Spleen (tissue), 13 donors: ENCODE measurements at regions of chr14 and their contacts with region 1.

Region 1: GRCh38 chr14:71320107-71320733 is 413.0 kb downstream of the PCNX1 start:
- DNase-seq: peak; percentile 100
- H3K4me3 ChIP-seq: peak within 1 kb of the TSS; percentile 63 to 88 (median 74)
- H3K27ac ChIP-seq: peak within 1 kb of the TSS; percentile 87 to 99 (median 99)
- H3K4me1 ChIP-seq: peaks cover 17 to 55% (median 43%) of the 10 kb centered on the region in 6 donors
- H3K27me3 ChIP-seq: no peaks in the 10 kb centered on the region
- CTCF ChIP-seq: peak in 6 of 11 experiments; percentile 10 to 65 (median 40)
- POLR2A ChIP-seq: peak in 2 of 3 donors; percentile 75 to 94

Region 2: GRCh38 chr14:71138448-71139293 is 181.5 kb before region 1 on chr14:
- intact Hi-C with region 1: loop called (anchors 10 kb)
- DNase-seq: peak; percentile 87
- H3K4me3 ChIP-seq: peak overlapping the region in 3 of 8 donors; percentile 12 to 57 (median 16)
- H3K27ac ChIP-seq: peak overlapping the region in 2 of 8 donors; percentile 9 to 31
- H3K4me1 ChIP-seq: peaks cover 0 to 51% (median 36%) of the 10 kb centered on the region in 6 donors
- H3K27me3 ChIP-seq: no peaks in the 10 kb centered on the region
- CTCF ChIP-seq: peak; percentile 86 to 97 (median 93)
- POLR2A ChIP-seq: no peak

Region 3: DNA sequence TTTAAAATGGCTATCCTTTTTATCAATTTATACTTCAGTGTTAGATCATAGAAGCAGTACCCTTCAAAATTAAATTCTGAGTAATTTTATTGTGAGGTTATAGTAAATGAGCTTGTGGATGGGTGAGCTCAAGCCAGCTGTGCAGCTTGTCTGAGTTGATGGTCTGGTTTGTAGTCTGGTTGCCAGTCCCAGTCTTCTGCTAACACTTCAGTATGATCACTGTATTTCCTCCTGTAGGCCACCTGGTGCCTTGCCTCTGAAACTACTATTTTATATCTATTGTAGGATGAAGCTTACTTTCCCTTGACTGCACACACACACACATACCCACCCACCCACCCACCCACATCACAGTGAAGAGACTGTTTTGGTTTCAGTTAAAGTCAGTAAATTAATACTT is 83.4 kb after region 1 on chr14:
- intact Hi-C with region 1: loop called (anchors 10 kb)
- DNase-seq: no peak
- H3K4me3 ChIP-seq: no peak overlapping the region
- H3K27ac ChIP-seq: peak overlapping the region in 3 of 8 donors; percentile 48 to 95 (median 89)
- H3K4me1 ChIP-seq: peaks cover 17 to 78% (median 46%) of the 10 kb centered on the region in 6 donors
- H3K27me3 ChIP-seq: no peaks in the 10 kb centered on the region
- CTCF ChIP-seq: peak in 3 of 11 experiments; percentile 11 to 41 (median 36)
- POLR2A ChIP-seq: no peak

Region 4: GRCh38 chr14:71415404-71415690 is 95.1 kb after region 1 on chr14:
- intact Hi-C with region 1: no loop called
- DNase-seq: no peak
- H3K4me3 ChIP-seq: no peak overlapping the region
- H3K27ac ChIP-seq: peak overlapping the region; percentile 6 to 75 (median 55)
- H3K4me1 ChIP-seq: peaks cover 0 to 74% (median 37%) of the 10 kb centered on the region in 6 donors
- H3K27me3 ChIP-seq: no peaks in the 10 kb centered on the region
- CTCF ChIP-seq: no peak
- POLR2A ChIP-seq: no peak

Region 5: GRCh38 chr14:71529848-71530247 is 209.6 kb after region 1 on chr14:
- intact Hi-C with region 1: loop called (anchors 10 kb)
- DNase-seq: no peak
- H3K4me3 ChIP-seq: no peak overlapping the region
- H3K27ac ChIP-seq: peak overlapping the region in 6 of 8 donors; percentile 24 to 63 (median 56)
- H3K4me1 ChIP-seq: peaks cover 0 to 30% (median 3%) of the 10 kb centered on the region in 6 donors
- H3K27me3 ChIP-seq: no peaks in the 10 kb centered on the region
- CTCF ChIP-seq: no peak
- POLR2A ChIP-seq: no peak

Region 6: DNA sequence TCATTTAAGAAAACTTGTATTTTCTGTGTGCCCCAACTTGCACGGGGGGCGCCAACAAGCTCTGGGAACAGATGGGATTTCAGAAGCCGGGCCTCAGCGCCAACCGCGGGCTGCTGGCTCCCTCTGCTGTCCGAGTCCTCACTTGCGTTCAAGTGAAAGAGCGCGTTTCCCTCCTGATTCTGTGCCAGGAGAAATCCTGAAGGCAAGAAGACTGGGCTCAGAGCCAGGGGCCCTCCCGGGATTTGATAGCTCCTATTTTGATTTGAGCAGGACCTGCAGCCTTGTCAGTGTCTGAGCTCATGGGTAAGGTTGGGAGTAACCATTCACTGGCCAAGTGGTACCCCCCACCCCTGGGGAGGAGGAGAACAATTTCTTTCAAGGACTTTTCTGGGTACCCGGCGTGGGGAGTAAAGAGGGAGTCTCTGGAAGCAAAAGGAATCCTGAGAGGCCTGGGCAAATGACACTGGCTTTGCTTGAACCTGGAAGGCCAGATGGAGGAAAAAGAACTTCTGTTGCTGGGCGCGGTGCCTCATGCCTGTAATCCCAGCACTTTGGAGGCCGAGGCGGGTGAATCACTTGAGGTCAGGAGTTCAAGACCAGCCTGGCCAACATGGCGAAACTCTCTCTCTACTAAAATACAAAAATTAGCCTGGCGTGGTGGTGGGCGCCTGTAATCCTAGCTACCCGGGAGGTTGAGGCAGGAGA is 433.1 kb after region 1 on chr14:
- intact Hi-C with region 1: loop called (anchors 10 kb)
- DNase-seq: peak; percentile 93
- H3K4me3 ChIP-seq: peak overlapping the region in 1 of 8 donors; percentile 43
- H3K27ac ChIP-seq: peak overlapping the region in 5 of 8 donors; percentile 36 to 68 (median 49)
- H3K4me1 ChIP-seq: peaks cover 5 to 20% (median 12%) of the 10 kb centered on the region in 6 donors
- H3K27me3 ChIP-seq: no peaks in the 10 kb centered on the region
- CTCF ChIP-seq: peak; percentile 73 to 93 (median 87)
- POLR2A ChIP-seq: no peak